IMR-90 (cell line): ENCODE measurements at regions of chr6 and their contacts with region 1.

Region 1: GRCh38 chr6:54892831-54893230 is 46.3 kb downstream of the FAM83B start:
- DNase-seq: peak; percentile 96
- ATAC-seq: peak; percentile 82
- H3K4me3 ChIP-seq: no peak overlapping the region
- H3K27ac ChIP-seq: no peak overlapping the region
- H3K4me1 ChIP-seq: peaks cover 2% of the 10 kb centered on the region; the same call in 1 of the 2 replicates
- H3K27me3 ChIP-seq: no peaks in the 10 kb centered on the region
- CTCF ChIP-seq: no peak
- POLR2A ChIP-seq: no peak
- RAD21 ChIP-seq: no peak

Region 2: DNA sequence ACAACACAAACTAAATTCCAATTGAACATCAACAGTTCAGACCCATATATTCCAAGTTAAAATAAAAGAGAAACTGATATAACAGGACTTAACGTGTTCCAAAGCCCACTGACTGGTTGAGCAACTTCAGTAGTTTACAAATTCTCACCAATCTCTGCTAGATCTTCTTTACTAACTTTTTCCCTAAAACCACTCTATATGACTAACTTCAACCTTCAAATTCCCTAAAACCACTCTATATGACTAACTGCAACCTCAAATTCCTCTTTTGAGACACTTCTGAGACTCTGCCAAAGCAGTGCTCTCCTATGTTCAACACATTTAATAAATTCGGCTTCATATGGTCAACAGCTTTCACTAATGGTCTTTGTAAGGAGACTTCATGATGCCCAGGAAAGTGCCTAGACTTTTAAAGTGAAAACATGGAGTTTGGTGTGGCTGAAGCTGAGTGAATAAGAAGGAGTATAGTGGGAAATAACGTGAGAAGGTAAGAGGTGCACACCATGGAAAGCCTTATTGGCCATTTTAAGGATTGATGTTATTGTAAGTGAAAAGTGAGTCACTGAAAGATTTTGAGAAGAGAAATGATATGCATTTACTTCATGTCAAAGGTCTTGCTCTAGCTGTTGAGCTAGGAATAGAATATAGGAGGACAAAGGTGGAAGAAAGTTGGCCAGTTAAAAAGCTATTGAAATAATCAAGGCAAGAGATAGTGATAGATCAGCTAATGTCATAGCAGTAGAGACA is 147.4 kb after region 1 on chr6:
- CTCF ChIA-PET with region 1: no interaction called
- POLR2A ChIA-PET with region 1: no interaction called
- dilution Hi-C with region 1: no loop called
- in situ Hi-C with region 1: no loop called
- intact Hi-C with region 1: loop called (anchors 10 kb)
- DNase-seq: peak; percentile 96
- ATAC-seq: peak; percentile 95
- H3K4me3 ChIP-seq: no peak overlapping the region
- H3K27ac ChIP-seq: no peak overlapping the region
- H3K4me1 ChIP-seq: peaks cover 2% of the 10 kb centered on the region; the same call in 1 of the 2 replicates
- H3K27me3 ChIP-seq: no peaks in the 10 kb centered on the region
- CTCF ChIP-seq: no peak
- POLR2A ChIP-seq: no peak
- RAD21 ChIP-seq: no peak